ENCODE measurements at regions of chr3 and their contacts with region 1.

Region 1: DNA sequence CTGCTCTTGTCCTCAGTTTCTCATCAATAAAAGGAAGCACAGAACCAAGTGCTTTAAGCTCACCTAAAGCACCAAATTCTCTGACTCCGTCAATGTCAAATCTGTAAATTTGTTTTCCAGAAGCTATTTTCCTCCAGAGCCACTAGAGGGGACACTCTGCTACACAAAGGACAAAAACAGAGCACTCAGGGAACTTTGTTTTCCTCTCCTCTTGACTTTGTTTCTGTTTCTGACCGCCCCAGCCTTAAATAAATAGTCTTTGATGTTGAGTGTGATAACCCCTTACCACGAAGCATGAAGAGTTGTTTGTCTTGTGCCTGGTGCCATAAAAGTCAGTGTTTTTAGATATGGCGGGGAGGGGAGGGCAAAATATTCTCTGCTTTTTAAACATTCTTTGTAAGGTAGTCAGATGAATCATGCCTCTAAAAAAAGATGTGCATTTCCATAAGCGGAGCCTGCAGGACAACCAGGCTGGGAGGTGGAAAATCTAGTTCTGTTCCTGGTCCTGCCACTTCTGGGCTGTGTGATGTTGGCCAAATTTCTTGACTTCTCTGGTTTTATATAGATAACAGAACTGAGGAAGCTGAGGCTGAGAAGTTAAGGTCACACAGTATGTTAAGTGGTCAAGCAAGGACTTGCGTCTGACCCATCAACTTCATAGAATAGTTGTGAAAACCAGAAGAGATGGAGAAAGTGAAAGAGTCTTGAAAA is 7.3 kb upstream of the ZBTB38 start:
- H3K4me3 ChIP-seq: peak overlapping the region; percentile 12; the same call in 1 of the 2 replicates
- H3K27ac ChIP-seq: no peak overlapping the region
- H3K4me1 ChIP-seq: no peaks in the 10 kb centered on the region
- CTCF ChIP-seq: 0 out of 2 replicates have a peak, but pooled peaks have one; percentile 30

Region 2: GRCh38 chr3:141303481-141304223 is 57.4 kb before region 1 on chr3:
- CTCF ChIA-PET with region 1: interaction called, 10 read pairs
- POLR2A ChIA-PET with region 1: no interaction called
- H3K4me3 ChIP-seq: no peak overlapping the region
- H3K27ac ChIP-seq: no peak overlapping the region
- H3K4me1 ChIP-seq: no peaks in the 10 kb centered on the region
- CTCF ChIP-seq: no peak

Region 3: DNA sequence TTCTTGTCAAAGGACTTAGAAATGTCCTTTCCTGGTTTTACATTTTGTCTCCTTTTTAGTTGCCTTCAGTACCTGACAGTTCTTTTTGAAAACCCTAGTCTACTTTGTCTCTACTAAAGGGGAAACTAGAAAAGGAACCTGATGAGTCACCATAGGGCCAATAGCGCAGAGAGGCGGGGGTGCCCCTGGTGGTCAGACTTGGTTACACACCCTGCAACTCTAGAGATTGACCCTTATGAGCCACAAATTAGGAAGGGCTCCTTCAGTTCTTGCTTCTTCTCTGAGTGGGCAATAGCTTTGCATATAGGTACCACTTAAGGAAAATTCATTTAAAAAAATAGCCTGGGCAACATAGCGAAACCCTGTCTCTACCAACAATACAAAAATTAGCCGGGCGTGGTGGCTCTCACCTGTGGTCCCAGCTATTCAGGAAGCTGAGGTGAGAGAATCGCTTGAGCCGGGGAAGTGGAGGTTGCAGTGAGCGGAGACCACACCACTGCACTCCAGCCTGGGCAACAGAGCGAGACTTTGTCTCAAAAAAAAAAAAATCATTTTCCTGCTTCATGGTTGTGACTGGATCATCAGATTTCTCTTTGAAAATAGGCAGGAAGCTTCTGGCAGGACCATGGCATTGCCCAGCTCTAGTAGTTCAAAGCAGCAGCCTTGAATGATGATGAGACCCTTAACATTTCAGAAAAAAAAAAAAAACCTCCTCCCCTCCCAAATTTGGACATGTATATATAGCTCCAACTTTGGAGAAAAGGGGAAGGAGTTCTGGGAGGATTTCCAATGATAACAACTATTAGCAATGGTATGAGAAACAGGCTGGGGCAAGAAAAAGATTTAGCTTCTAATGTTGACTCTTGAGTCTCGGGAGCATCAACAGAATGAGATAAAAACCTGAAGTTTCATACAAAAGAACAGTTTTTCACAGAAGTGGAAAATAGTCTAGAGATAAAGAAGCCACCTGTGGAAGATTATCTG is 80.6 kb after region 1 on chr3:
- CTCF ChIA-PET with region 1: interaction called, 29 read pairs
- POLR2A ChIA-PET with region 1: no interaction called
- H3K4me3 ChIP-seq: no peak overlapping the region
- H3K27ac ChIP-seq: no peak overlapping the region
- H3K4me1 ChIP-seq: no peaks in the 10 kb centered on the region
- CTCF ChIP-seq: no peak

Region 4: DNA sequence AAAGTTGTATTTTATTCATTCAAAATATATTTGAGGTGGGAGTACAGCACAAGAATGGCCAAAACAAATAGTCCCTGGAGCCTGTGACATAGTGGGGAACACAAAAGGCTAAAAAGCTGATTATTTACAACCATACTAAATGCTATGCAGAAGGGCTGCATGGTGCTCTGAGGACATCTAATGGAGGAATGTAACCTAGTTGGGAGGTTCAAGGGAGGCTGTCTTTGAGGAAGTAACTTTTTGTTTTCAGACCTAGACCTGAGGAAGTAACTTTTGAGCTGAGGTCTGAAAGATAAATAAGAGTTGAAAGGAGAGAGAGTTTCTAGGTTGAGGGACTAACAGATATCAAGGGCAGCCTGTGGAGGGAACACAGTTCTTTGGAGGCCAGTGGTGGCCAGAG is 91.0 kb after region 1 on chr3:
- CTCF ChIA-PET with region 1: interaction called, 36 read pairs
- POLR2A ChIA-PET with region 1: no interaction called
- H3K4me3 ChIP-seq: no peak overlapping the region
- H3K27ac ChIP-seq: no peak overlapping the region
- H3K4me1 ChIP-seq: no peaks in the 10 kb centered on the region
- CTCF ChIP-seq: peak; percentile 54; the same call in 1 of the 2 replicates

Region 5: DNA sequence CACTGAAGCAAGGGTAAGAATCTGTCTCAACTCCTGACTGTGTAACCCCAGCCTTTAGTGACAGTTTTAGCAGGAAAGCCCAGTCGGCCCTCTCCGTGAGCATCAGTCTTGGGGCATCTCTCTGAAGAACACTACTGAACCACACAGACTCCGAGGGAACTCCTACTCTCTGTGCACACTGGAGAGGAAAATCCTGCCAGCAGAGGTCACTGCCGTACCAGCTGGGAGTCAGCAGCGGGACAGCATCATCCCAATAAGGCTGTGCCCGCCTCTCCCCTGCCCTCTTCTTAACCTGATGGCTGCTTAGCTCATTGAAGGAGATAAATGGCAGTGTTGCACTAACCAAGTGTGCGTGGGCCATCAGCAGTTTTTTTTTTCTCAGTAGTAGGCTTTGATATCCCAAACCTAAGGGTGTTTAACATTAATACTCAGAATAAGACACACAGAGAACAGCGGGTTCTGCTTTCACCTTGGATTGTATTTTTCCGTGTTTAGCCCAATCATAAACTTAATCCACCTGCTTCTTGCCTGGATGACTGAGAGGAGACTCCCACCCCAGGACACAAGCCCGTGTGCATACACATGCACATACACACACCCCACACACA is 99.2 kb after region 1 on chr3:
- CTCF ChIA-PET with region 1: interaction called, 36 read pairs
- POLR2A ChIA-PET with region 1: no interaction called
- H3K4me3 ChIP-seq: no peak overlapping the region
- H3K27ac ChIP-seq: no peak overlapping the region
- H3K4me1 ChIP-seq: no peaks in the 10 kb centered on the region
- CTCF ChIP-seq: peak; percentile 81

Region 6: DNA sequence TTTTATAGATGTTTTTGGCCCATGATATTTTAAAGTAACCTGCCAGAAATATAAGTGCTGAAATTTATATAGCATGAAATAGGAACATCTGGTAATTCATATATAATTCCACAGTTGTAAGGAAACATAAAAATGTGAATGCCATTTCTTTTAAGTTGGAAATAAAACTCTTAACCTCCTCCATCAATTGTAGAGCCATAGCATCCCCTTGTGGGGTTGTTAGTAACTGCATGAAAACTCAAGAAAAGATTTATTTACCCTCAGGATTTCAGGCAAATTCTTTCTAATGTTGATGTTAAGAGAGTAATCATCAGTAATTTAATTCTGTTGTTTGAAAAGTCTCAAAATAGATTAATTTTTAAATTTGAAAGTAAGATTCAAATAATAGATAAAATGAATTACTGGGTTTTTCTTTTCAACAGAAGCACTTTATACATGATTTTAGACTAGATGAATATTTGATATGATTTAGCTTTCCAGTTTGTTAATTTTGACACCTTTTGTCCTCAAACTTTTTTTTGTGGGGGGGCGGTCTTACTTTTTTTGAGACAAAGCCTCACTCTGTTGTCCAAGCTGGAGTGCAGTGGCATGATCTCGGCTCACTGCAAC is 200.5 kb after region 1 on chr3:
- CTCF ChIA-PET with region 1: interaction called, 11 read pairs
- POLR2A ChIA-PET with region 1: no interaction called
- H3K4me3 ChIP-seq: no peak overlapping the region
- H3K27ac ChIP-seq: no peak overlapping the region
- H3K4me1 ChIP-seq: peaks cover 3% of the 10 kb centered on the region; the same call in 1 of the 2 replicates
- CTCF ChIP-seq: 0 out of 2 replicates have a peak, but pooled peaks have one; percentile 24